ENCODE measurements at regions of chr9 and their contacts with region 1.

Region 1: DNA sequence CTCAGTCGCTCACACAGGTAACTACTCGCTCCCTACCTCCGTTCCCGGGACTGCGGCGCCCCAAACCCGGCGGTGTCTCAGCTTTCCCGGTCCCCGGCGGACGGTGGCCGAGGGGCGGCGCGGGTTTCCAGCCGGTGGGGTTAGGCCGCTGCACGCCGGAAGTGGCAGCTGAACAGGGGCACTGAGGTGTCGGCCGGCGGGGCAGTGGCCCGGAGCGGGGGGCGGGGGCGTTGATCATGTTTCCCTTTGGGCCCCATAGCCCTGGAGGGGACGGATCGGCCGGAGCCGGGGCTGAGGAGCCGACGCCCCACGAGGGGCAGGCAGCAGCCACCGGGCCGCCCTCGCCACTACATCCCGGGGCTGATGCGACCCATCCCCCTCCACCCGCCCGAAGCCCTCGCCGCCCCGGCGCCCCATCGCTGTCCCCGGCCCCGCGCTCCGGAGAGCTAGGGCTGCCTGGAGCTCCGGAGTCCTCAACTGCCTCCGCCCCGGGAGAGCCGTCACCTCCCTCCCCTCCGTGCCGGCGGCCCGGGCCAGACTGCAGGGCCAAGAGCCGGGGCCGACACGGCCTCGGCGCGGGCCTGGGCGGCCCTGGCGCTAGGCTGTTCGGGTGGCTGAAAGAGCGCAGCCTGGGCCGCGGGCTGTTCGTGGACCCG is at the start of gene DCAF10:
- DNase-seq: peak; percentile 81

Region 2: GRCh38 chr9:37621273-37622121 is 179.3 kb before region 1 on chr9:
- CTCF ChIA-PET with region 1: no interaction called
- POLR2A ChIA-PET with region 1: no interaction called
- DNase-seq: no peak

Region 3: DNA sequence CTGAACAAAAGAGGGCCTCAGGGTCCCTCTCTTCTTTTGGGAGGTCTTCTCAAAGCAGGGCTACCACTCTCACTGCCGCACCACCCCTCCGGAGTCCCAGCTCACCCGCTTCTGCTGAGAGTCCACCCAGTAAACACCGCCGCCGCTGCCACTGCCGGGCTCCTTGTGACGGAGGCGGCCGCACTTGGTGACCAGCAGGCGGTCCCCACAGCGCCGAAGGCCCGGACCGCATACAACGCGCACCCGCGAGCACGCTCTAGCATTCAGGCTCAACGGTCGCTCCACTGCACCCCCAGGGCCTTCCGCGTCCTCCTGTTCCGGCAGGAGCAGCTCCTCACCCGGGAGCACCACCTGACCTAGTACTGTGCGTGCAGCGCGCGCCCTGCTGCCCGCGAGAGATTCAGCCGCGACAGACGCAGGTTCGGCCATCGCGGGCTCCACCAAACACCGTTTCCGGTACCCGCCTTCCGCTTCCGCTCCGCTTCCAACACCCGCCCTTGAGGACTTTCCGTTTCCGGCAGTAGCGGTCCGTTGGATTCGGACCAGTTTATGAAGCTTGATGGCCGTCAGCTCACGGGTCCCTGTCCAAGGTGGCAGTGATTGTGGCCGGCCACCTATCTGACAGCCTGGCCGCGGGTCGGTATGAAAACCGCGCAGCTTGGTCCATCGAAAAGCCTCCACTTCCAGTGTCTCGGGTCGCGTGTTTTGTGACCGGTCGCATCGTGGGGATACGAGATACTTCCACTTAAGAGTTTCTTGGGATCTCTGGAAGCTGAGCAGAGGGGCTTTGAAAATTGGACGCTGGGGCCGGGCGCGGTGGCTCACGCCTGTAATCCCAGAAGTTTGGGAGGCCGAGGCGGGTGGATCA is 15.9 kb before region 1 on chr9 and contains the start of gene EXOSC3:
- CTCF ChIA-PET with region 1: interaction called, 4 read pairs
- POLR2A ChIA-PET with region 1: interaction called, 19 read pairs
- DNase-seq: peak; percentile 83

Region 4: GRCh38 chr9:37820142-37820541 is 19.4 kb after region 1 on chr9:
- CTCF ChIA-PET with region 1: no interaction called
- POLR2A ChIA-PET with region 1: no interaction called
- DNase-seq: no peak

Region 5: DNA sequence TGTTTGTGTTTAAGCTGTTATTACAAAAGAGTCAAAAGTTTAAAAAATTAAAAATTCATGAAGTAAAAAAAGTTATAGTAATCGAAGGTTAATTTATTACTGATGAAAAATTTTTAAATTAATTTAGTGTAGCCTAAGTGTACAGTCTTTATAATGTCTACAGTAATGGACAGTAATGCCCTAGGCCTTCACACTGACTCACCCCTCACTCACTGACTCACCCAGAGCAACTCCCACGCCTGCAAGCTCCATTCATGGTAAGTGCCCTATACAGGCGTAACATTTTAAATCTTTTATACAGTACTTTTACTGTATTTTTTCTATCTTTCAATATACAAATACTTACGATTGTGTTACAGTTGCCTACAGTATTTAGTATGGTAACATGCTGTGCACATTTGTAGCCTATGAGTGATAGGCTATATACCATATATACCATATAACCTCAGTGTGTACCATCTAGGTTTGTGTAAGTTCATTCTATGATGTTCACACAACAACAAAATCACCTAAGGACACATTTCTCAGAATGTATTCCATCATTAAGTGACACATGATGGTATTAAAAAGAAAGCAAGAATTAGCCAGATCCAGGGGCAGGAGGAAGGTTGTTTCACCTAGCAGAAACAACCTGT is 39.9 kb after region 1 on chr9:
- CTCF ChIA-PET with region 1: no interaction called
- POLR2A ChIA-PET with region 1: no interaction called
- DNase-seq: no peak

Measured in HEK293T (cell line).